MCF 10A (cell line): ENCODE measurements at regions of chr16 and their contacts with region 1.

Region 1: GRCh38 chr16:56625140-56625942 is at the start of gene MT1E:
- DNase-seq: peak; percentile 81
- H3K4me3 Mint-ChIP-seq: peak within 1 kb of the TSS; percentile 95
- H3K27ac Mint-ChIP-seq: peak within 1 kb of the TSS; percentile 81
- H3K4me1 Mint-ChIP-seq: peaks cover 11% of the 10 kb centered on the region
- H3K27me3 Mint-ChIP-seq: no peaks in the 10 kb centered on the region
- CTCF ChIP-seq: no peak
- total RNA-seq, gene MT1E: 518 and 934 TPM in 2 replicates

Region 2: DNA sequence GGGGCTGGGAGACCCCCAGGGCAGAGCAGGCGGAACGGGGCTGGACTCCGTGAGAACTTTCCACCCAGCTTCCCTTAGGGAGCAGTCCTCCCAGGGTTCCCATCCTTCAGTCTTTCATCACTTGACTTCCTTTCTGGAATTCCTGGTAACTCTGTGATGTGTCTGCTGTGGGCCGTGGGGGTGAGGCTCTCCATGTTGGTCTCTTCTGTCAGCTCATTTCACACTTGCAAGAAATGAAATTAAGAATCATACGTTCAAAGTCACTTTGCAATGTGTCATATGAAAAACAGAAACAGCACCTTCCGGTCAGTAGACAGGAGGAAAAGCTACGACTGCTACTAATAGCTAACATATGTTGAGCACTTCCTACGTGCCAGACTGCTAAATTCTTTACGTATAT is 100.1 kb before region 1 on chr16:
- CTCF ChIA-PET with region 1: no interaction called
- POLR2A ChIA-PET with region 1: no interaction called
- intact Hi-C with region 1: no loop called
- DNase-seq: no peak
- H3K4me3 Mint-ChIP-seq: no peak overlapping the region
- H3K27ac Mint-ChIP-seq: no peak overlapping the region
- H3K4me1 Mint-ChIP-seq: peaks cover 13% of the 10 kb centered on the region
- H3K27me3 Mint-ChIP-seq: no peaks in the 10 kb centered on the region
- CTCF ChIP-seq: no peak

Region 3: GRCh38 chr16:56547120-56547948 is 78.0 kb before region 1 on chr16:
- CTCF ChIA-PET with region 1: no interaction called
- POLR2A ChIA-PET with region 1: interaction called, 10 read pairs
- intact Hi-C with region 1: no loop called
- DNase-seq: peak; percentile 60
- H3K4me3 Mint-ChIP-seq: no peak overlapping the region
- H3K27ac Mint-ChIP-seq: no peak overlapping the region
- H3K4me1 Mint-ChIP-seq: peaks cover 20% of the 10 kb centered on the region
- H3K27me3 Mint-ChIP-seq: no peaks in the 10 kb centered on the region
- CTCF ChIP-seq: no peak

Region 4: DNA sequence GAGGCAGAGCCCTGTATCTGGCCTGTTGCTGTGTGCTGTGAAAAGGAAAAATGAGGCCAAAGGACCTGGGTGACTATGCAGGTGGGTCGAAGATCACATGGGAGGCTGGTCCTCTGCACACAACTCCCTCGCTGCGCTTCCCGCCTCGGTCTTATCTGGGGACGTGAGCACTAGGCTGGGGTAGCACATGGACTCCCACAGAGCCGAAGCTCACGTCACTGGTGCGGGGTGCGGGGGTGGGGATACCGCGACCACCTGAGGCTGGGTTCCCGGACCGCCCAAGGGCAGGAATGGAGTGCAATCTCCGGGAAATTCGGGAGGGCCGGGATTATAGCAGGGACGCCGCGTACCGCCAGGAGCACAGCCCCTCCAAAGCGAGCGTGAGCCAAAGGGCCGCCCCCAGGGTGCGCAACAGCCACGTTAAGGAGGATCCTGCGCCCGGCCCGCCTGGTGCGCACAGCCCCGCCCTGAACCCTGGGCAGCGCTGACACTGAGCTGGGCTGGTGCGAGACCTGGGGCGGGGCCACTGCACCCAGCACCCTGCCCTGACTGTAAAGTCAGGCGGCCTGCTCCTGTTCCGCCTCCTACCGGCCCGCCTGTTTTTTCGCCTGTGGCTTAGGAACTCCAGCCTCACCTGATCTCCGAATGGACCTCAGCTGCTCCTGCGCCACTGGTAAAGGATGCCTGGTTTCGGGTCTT is 17.9 kb after region 1 on chr16:
- CTCF ChIA-PET with region 1: interaction called, 7 read pairs
- POLR2A ChIA-PET with region 1: interaction called, 27 read pairs
- intact Hi-C with region 1: no loop called
- DNase-seq: peak; percentile 86
- H3K4me3 Mint-ChIP-seq: peak overlapping the region; percentile 25
- H3K27ac Mint-ChIP-seq: no peak overlapping the region
- H3K4me1 Mint-ChIP-seq: peaks cover 3% of the 10 kb centered on the region
- H3K27me3 Mint-ChIP-seq: no peaks in the 10 kb centered on the region
- CTCF ChIP-seq: peak; percentile 62

Region 5: DNA sequence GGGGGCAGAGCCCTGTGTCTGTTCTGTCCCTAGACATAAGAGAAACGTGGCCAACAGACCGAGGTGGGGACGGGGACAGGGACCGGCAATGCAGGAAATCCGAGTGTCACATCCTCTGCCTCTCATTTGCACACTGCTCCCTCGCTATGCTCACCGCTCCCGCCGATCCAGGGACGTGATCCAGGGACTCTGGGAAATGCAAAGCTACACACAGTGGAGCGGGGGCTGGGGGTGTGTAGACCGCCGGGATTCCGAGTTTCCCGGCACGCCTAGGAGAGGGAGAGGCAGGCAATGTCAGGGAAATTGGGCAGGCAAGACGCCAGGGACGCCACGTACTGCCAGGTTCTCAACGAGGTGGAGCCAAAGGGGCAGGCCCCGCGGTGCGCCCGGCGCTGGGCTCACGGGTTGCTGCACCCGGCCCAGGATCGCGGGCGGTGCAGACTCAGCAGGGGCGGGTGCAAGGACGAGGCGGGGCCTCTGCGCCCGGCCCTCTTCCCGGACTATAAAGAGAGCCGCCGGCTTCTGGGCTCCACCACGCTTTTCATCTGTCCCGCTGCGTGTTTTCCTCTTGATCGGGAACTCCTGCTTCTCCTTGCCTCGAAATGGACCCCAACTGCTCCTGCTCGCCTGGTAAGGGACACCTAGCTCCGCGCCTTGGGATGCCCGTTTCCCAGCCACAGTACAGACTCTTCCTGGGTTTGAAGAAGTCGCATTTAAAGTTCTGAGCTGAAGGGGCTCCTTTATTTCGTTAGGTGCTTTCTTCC is 56.8 kb after region 1 on chr16 and contains the start of gene MT1X:
- CTCF ChIA-PET with region 1: interaction called, 3 read pairs
- POLR2A ChIA-PET with region 1: interaction called, 444 read pairs
- intact Hi-C with region 1: no loop called
- DNase-seq: peak; percentile 95
- H3K4me3 Mint-ChIP-seq: peak within 1 kb of the TSS; percentile 70
- H3K27ac Mint-ChIP-seq: peak within 1 kb of the TSS; percentile 67
- H3K4me1 Mint-ChIP-seq: peaks cover 26% of the 10 kb centered on the region
- H3K27me3 Mint-ChIP-seq: no peaks in the 10 kb centered on the region
- CTCF ChIP-seq: no peak
- total RNA-seq, gene MT1X: 79.3 and 108 TPM in 2 replicates